WTC11 (cell line): ENCODE measurements at regions of chr18 and their contacts with region 1.

Region 1: DNA sequence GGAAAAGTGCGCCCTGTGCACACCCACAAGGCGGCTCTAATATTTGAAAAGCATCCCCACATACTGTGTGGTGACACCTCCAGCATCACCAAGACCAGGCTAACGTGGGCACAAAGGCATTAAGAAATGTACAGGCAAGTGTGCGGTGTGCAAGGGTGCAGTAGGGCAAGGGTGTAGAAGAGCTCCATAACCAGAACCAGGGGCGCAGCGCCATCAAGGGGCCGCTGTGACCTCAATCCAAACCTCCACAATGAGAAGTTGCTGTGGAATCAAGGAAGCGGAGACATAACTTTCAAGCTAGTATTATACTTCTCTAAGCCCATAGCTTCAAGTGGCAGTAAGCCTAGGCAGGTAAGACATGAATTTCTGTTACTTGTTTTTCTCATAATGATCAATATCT is 13.0 kb downstream of the L3MBTL4 start:
- DNase-seq: peak; percentile 50
- ATAC-seq: peak; percentile 84
- H3K4me3 Mint-ChIP-seq: no peak overlapping the region
- H3K27ac Mint-ChIP-seq: no peak overlapping the region
- H3K4me1 Mint-ChIP-seq: peaks cover 10% of the 10 kb centered on the region
- H3K27me3 Mint-ChIP-seq: no peaks in the 10 kb centered on the region
- CTCF ChIP-seq: 0 out of 2 replicates have a peak, but pooled peaks have one; percentile 26

Region 2: GRCh38 chr18:6120820-6121279 is 280.8 kb before region 1 on chr18:
- CTCF ChIA-PET with region 1: no interaction called
- POLR2A ChIA-PET with region 1: no interaction called
- DNase-seq: no peak
- ATAC-seq: no peak
- H3K4me3 Mint-ChIP-seq: no peak overlapping the region
- H3K27ac Mint-ChIP-seq: no peak overlapping the region
- H3K4me1 Mint-ChIP-seq: peaks cover 10% of the 10 kb centered on the region
- H3K27me3 Mint-ChIP-seq: no peaks in the 10 kb centered on the region
- CTCF ChIP-seq: no peak

Region 3: DNA sequence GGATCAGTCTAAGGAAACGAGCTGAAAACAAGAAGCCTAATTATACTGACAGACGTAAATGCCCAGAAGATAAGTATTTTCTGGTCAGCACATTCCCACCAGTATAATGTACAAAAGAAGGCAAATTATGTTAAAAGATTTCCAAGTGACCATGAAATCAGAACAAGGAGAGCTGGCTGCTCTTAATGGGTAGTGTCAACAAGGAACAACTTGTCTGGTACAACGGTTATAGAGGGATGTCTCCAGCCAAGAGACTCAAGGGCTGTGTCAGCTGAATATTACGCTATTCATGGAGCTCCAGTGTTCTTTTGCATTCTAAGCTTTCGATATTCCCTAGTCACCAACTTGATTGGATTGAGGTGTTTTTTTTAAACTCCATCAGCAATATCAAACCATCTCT is 21.6 kb after region 1 on chr18:
- CTCF ChIA-PET with region 1: interaction called, 11 read pairs
- POLR2A ChIA-PET with region 1: no interaction called
- DNase-seq: no peak
- ATAC-seq: no peak
- H3K4me3 Mint-ChIP-seq: no peak overlapping the region
- H3K27ac Mint-ChIP-seq: no peak overlapping the region
- H3K4me1 Mint-ChIP-seq: no peaks in the 10 kb centered on the region
- H3K27me3 Mint-ChIP-seq: no peaks in the 10 kb centered on the region
- CTCF ChIP-seq: no peak